ENCODE measurements at regions of chr6 and their contacts with region 1.

Region 1: GRCh38 chr6:27518881-27519795 is 46.2 kb upstream of the ZNF184 start:
- DNase-seq: peak; percentile 68
- H3K4me3 ChIP-seq: peak overlapping the region; percentile 48 to 93 (median 68)
- H3K27ac ChIP-seq: peak overlapping the region; percentile 84 to 91 (median 89)
- H3K4me1 ChIP-seq: peaks cover 0 to 9% (median 6%) of the 10 kb centered on the region in 4 donors
- H3K27me3 ChIP-seq: peaks cover 27% of the 10 kb centered on the region
- CTCF ChIP-seq: peak; percentile 58 to 82 (median 66)
- EP300 ChIP-seq: no peak
- POLR2A ChIP-seq: no peak

Region 2: DNA sequence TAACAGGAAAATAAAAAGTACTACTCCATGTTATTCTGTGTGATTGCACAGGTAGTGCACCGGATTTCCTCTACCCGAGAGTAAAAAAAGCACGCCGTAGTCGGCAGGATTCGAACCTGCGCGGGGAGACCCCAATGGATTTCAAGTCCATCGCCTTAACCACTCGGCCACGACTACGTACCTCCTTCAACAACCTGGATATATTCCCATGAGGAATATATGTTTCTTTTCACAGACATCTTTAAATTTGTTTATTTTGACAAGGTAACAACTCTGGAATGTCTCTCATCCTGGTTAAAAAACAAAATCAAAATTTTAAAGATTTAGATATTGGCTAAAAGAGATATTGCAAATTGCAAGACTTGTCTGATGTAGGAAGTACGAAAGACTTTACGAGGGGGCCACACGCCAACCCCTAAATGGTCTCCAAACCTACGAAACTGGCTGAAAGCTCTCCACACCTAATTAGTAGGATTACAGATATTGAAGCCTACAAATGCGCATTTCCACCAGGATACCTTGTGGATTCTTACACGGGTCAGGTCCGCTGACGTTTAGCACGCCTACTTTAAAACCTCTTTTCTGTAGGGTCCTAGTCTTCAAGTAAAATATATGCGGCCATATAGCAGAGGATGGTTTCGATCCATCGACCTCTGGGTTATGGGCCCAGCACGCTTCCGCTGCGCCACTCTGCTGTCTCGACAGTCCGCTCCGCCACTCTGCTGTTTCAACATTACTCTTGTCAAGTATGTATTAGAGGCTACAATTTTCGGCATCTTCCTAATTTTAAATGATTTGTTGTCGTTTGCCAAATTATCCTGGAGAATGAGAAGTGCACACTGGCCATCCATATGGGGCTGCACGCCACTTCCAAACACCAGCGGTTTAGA is 1206.4 kb before region 1 on chr6:
- in situ Hi-C with region 1: loop called in 1 of 4 experiments (anchors 25 kb)
- intact Hi-C with region 1: no loop called
- DNase-seq: peak; percentile 85
- H3K4me3 ChIP-seq: peak overlapping the region; percentile 18 to 60 (median 30)
- H3K27ac ChIP-seq: peak overlapping the region; percentile 56 to 78 (median 65)
- H3K4me1 ChIP-seq: peaks cover 0 to 22% (median 7%) of the 10 kb centered on the region in 4 donors
- H3K27me3 ChIP-seq: no peaks in the 10 kb centered on the region
- CTCF ChIP-seq: no peak
- EP300 ChIP-seq: no peak
- POLR2A ChIP-seq: no peak

Region 3: GRCh38 chr6:27177485-27178406 is 341.4 kb before region 1 on chr6:
- in situ Hi-C with region 1: loop called in 3 of 4 experiments (anchors 25 kb)
- intact Hi-C with region 1: no loop called
- DNase-seq: peak; percentile 88
- H3K4me3 ChIP-seq: peak overlapping the region; percentile 80 to 96 (median 88)
- H3K27ac ChIP-seq: peak overlapping the region; percentile 91 to 96 (median 92)
- H3K4me1 ChIP-seq: peaks cover 0 to 17% (median 3%) of the 10 kb centered on the region in 4 donors
- H3K27me3 ChIP-seq: no peaks in the 10 kb centered on the region
- CTCF ChIP-seq: peak; percentile 39 to 72 (median 52)
- EP300 ChIP-seq: no peak
- POLR2A ChIP-seq: peak; percentile 59

Region 4: DNA sequence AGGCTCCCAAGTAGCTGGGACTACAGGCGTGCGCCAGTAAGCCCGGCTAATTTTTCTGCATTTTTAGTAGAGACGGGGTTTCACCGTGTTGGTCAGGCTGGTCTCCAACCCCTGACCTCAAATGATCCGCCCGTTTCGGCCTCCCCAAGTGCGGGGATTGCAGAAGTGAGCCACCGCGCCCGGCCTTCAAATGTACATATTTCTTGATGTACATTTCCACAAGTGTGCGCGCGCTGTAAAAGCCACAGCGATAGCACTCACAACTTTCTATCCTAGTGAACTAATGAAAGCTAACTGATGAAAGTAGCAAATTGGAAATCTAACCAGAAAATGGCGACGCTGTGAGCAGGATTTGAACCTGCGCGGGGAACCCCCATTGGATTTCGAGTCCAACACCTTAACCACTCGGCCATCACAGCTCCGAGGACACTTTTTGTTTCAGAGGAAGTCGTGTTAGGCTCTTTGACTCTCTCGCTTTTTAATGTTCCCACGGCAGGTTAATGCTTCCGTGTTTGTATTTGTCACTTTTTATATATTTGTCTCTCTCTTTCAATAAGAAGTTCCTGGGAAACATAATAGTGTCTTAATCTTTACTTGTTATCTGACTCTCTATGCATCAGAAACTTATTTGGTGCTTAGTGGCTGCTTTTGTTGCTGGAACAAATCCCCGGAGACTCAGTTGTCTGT is 153.1 kb after region 1 on chr6:
- in situ Hi-C with region 1: no loop called
- intact Hi-C with region 1: no loop called
- DNase-seq: peak; percentile 14
- H3K4me3 ChIP-seq: no peak overlapping the region
- H3K27ac ChIP-seq: no peak overlapping the region
- H3K4me1 ChIP-seq: peaks cover 0 to 12% (median 7%) of the 10 kb centered on the region in 4 donors
- H3K27me3 ChIP-seq: peaks cover 100% of the 10 kb centered on the region
- CTCF ChIP-seq: no peak
- EP300 ChIP-seq: no peak
- POLR2A ChIP-seq: no peak

Region 5: GRCh38 chr6:27726620-27727023 is 207.5 kb after region 1 on chr6:
- in situ Hi-C with region 1: loop called in 1 of 4 experiments (anchors 25 kb)
- intact Hi-C with region 1: no loop called
- DNase-seq: no peak
- H3K4me3 ChIP-seq: no peak overlapping the region
- H3K27ac ChIP-seq: no peak overlapping the region
- H3K4me1 ChIP-seq: no peaks in the 10 kb centered on the region
- H3K27me3 ChIP-seq: peaks cover 64% of the 10 kb centered on the region
- CTCF ChIP-seq: no peak
- EP300 ChIP-seq: no peak
- POLR2A ChIP-seq: no peak

Region 6: GRCh38 chr6:27893059-27893835 is 374.1 kb after region 1 on chr6:
- in situ Hi-C with region 1: loop called in 1 of 4 experiments (anchors 25 kb)
- intact Hi-C with region 1: no loop called
- DNase-seq: peak; percentile 93
- H3K4me3 ChIP-seq: peak overlapping the region; percentile 23 to 80 (median 63)
- H3K27ac ChIP-seq: peak overlapping the region; percentile 90 to 96 (median 92)
- H3K4me1 ChIP-seq: peaks cover 0 to 54% (median 22%) of the 10 kb centered on the region in 4 donors
- H3K27me3 ChIP-seq: peaks cover 47% of the 10 kb centered on the region
- CTCF ChIP-seq: peak in 1 of 5 experiments; percentile 28
- EP300 ChIP-seq: no peak
- POLR2A ChIP-seq: peak; percentile 99

Measured in transverse colon (tissue), 4 donors.